Activated B cell treated with CpG ODN at 0.5 μM for 24 hours (primary cell): ENCODE measurements at regions of chr17 and their contacts with region 1.

Region 1: GRCh38 chr17:20103454-20104446 is 94.6 kb downstream of the SPECC1 start:
- DNase-seq: no peak
- ATAC-seq: no peak
- H3K4me3 Mint-ChIP-seq: no peak overlapping the region
- H3K27ac Mint-ChIP-seq: no peak overlapping the region
- H3K4me1 Mint-ChIP-seq: no peaks in the 10 kb centered on the region
- H3K27me3 Mint-ChIP-seq: peaks cover 6% of the 10 kb centered on the region
- CTCF ChIP-seq: no peak

Region 2: DNA sequence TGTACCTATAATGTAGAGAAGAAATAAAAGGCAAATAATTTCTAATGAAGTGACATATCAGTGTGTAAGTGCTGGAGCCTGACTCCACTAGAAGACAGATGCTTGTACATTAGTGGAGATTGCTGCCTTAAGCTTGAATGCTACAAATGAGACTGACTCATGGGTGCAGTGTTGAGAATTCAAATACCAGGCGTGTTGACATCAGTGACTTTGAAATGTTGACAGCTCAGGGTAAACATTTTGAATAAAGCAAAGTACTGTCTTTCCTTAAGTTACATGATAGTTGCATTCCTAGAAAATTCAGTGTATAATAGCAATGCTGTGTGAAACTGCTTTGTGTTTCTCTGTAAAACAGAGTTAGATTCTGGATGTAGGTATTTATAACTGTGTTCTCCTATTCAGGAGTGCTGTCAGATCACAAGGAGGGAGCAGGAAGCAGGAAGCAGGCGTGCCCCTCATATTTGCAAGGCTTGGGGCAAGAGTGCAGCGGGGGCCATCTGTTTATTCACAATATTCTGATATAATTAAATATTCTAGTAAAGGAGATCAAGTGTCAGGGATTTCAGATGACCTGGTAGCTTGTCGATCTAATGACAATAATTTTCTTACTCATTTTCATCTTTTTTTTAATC is 24.4 kb after region 1 on chr17:
- CTCF ChIA-PET with region 1: no interaction called
- POLR2A ChIA-PET with region 1: interaction called, 10 read pairs
- intact Hi-C with region 1: no loop called
- DNase-seq: no peak
- ATAC-seq: no peak
- H3K4me3 Mint-ChIP-seq: no peak overlapping the region
- H3K27ac Mint-ChIP-seq: no peak overlapping the region
- H3K4me1 Mint-ChIP-seq: no peaks in the 10 kb centered on the region
- H3K27me3 Mint-ChIP-seq: no peaks in the 10 kb centered on the region
- CTCF ChIP-seq: no peak

Region 3: GRCh38 chr17:20302246-20302917 is 198.6 kb after region 1 on chr17:
- CTCF ChIA-PET with region 1: no interaction called
- POLR2A ChIA-PET with region 1: interaction called, 11 read pairs
- intact Hi-C with region 1: no loop called
- DNase-seq: no peak
- ATAC-seq: no peak
- H3K4me3 Mint-ChIP-seq: no peak overlapping the region
- H3K27ac Mint-ChIP-seq: no peak overlapping the region
- H3K4me1 Mint-ChIP-seq: no peaks in the 10 kb centered on the region
- H3K27me3 Mint-ChIP-seq: no peaks in the 10 kb centered on the region
- CTCF ChIP-seq: no peak